ENCODE measurements at regions of chr13 and their contacts with region 1.

Region 1: DNA sequence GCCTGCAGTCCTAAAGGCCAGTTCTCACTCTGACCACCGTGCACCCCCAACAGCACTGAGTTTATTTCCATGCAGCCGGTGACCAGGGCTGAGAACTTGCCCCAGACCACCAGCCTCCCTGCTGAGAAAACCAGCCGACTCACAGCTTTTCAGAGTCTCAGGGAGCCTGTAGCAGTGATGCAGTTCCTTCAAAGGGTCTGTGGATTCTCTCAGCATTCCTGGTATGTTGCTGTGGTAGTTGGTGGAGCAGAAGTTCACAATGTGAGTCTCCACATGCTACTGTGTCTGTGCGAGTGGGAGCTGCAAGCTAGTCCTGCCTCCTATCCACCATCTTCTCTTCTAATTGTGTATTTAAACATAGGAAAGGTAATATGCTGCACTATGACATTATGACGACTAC is 254.9 kb upstream of the KLF12 start:
- DNase-seq: no peak
- H3K4me3 ChIP-seq: no peak overlapping the region
- H3K27ac ChIP-seq: no peak overlapping the region
- H3K4me1 ChIP-seq: no peaks in the 10 kb centered on the region
- H3K27me3 ChIP-seq: no peaks in the 10 kb centered on the region
- CTCF ChIP-seq: no peak
- POLR2A ChIP-seq: no peak

Region 2: GRCh38 chr13:73792796-73793195 is 596.3 kb before region 1 on chr13:
- intact Hi-C with region 1: no loop called
- DNase-seq: no peak
- H3K4me3 ChIP-seq: no peak overlapping the region
- H3K27ac ChIP-seq: no peak overlapping the region
- H3K4me1 ChIP-seq: no peaks in the 10 kb centered on the region
- H3K27me3 ChIP-seq: no peaks in the 10 kb centered on the region
- CTCF ChIP-seq: no peak
- POLR2A ChIP-seq: no peak

Region 3: GRCh38 chr13:74367193-74367592 is 21.9 kb before region 1 on chr13:
- intact Hi-C with region 1: loop called (anchors 2 kb)
- DNase-seq: no peak
- H3K4me3 ChIP-seq: no peak overlapping the region
- H3K27ac ChIP-seq: no peak overlapping the region
- H3K4me1 ChIP-seq: no peaks in the 10 kb centered on the region
- H3K27me3 ChIP-seq: no peaks in the 10 kb centered on the region
- CTCF ChIP-seq: no peak
- POLR2A ChIP-seq: no peak

Measured in breast epithelium (tissue), 4 donors.